ENCODE measurements at regions of chr2 and their contacts with region 1.

Region 1: GRCh38 chr2:234500394-234501006 is 3.6 kb upstream of the ARL4C start:
- DNase-seq: peak; percentile 59 to 91 (median 72)
- ATAC-seq: peak; percentile 46
- H3K4me3 ChIP-seq: no peak overlapping the region
- H3K4me3 Mint-ChIP-seq: peak overlapping the region; percentile 79
- H3K27ac ChIP-seq: no peak overlapping the region
- H3K27ac Mint-ChIP-seq: peak overlapping the region; percentile 96
- H3K4me1 ChIP-seq: peaks cover 29% of the 10 kb centered on the region
- H3K4me1 Mint-ChIP-seq: peaks cover 32% of the 10 kb centered on the region
- H3K27me3 ChIP-seq: no peaks in the 10 kb centered on the region
- H3K27me3 Mint-ChIP-seq: no peaks in the 10 kb centered on the region
- CTCF ChIP-seq: peak; percentile 80

Region 2: DNA sequence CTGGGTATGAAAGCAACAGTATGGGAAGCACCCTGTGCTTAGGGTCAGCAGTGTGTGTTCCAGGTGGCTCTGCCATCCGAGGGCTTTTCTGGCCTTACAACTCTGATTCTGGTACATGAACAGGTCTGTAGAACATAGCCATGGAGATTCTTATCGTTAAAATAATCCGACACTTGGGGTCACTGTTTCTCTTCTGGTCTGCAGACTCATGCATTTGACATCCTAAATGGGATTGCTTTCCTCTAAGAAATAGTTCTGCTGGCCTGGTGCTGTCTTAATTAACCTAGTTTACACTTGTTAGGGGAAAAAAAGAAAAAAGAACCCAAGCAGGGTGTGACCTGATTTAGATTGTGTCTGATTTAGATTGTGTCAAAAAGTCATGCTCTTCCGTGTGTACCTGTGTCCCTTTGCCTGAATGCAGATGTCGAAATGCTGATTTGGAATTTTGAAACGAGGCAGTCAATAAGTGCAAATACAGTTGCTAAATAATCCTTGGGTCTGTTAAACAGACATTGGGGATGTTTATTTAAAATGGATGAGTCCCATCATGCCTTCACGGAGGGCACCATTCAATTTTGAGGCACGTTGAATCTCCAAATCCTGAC is 523.7 kb before region 1 on chr2:
- CTCF ChIA-PET with region 1: interaction called, 3 read pairs
- POLR2A ChIA-PET with region 1: interaction called, 3 read pairs
- intact Hi-C with region 1: loop called (anchors 1 kb)
- DNase-seq: peak in 4 of 14 experiments; percentile 40 to 80 (median 80)
- ATAC-seq: peak; percentile 68
- H3K4me3 ChIP-seq: no peak overlapping the region
- H3K4me3 Mint-ChIP-seq: no peak overlapping the region
- H3K27ac ChIP-seq: no peak overlapping the region
- H3K27ac Mint-ChIP-seq: no peak overlapping the region
- H3K4me1 ChIP-seq: peaks cover 17% of the 10 kb centered on the region
- H3K4me1 Mint-ChIP-seq: peaks cover 28% of the 10 kb centered on the region
- H3K27me3 ChIP-seq: no peaks in the 10 kb centered on the region
- H3K27me3 Mint-ChIP-seq: no peaks in the 10 kb centered on the region
- CTCF ChIP-seq: peak; percentile 81

Region 3: DNA sequence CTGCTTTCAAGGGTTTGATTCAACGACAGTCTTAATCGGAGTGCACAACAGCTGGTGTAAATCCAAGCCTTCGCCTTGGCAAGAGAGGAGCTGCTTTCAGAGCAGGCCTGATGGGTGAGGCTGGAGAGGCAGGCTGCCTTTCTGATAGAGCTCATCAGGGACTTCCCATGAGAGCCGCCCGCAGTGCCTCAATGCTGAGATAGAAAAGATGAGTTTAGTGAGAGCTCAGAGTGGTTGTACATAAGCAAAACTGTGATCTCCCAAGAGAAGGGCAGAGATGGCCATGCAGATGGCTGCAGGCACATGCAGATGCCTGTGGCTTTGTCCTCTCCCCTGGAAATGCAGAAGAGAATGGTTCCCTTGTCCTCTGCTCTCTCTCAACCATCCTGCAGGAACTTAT is 125.8 kb before region 1 on chr2:
- CTCF ChIA-PET with region 1: interaction called, 3 read pairs
- POLR2A ChIA-PET with region 1: interaction called, 5 read pairs
- intact Hi-C with region 1: loop called in 1 of 2 experiments (anchors 5 kb)
- DNase-seq: no peak
- ATAC-seq: no peak
- H3K4me3 ChIP-seq: no peak overlapping the region
- H3K4me3 Mint-ChIP-seq: no peak overlapping the region
- H3K27ac ChIP-seq: no peak overlapping the region
- H3K27ac Mint-ChIP-seq: peak overlapping the region; percentile 88
- H3K4me1 ChIP-seq: peaks cover 39% of the 10 kb centered on the region
- H3K4me1 Mint-ChIP-seq: peaks cover 59% of the 10 kb centered on the region
- H3K27me3 ChIP-seq: no peaks in the 10 kb centered on the region
- H3K27me3 Mint-ChIP-seq: no peaks in the 10 kb centered on the region
- CTCF ChIP-seq: no peak

Region 4: DNA sequence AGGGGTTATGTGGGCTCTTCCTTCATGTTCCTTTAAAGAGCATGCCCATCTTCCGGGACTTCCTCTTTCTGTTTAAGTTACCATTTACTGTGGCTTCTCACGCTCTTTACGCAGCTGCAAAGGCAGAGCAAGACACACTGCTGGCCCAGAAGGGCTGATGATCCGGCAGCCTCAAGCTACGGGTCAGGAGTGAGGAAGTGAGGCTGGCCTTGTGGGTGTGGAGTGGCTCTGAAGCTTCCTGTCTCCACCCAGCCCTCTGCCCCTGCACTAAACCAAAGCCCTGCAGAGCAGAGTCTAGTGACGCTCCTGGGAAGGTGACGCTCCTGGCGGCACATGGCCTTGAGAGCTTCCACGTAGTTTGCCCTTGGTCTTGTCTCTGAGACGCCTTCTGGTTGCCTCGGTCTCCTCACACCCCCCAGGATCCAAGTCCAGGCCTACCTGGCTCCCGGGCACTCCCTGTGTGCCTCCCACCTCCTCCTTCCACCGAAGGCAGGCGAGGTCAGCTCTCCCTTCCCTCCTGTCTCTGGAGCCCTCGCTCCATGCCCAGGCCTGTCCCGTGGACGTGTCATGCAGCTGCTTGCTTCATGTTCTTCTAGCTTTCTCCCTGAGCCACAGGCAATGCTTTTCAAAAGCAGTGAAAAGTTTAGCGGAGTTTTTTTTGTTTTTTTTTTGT is 54.0 kb before region 1 on chr2:
- CTCF ChIA-PET with region 1: interaction called, 7 read pairs
- POLR2A ChIA-PET with region 1: interaction called, 265 read pairs
- intact Hi-C with region 1: no loop called
- DNase-seq: peak; percentile 61 to 96 (median 74)
- ATAC-seq: peak; percentile 81
- H3K4me3 ChIP-seq: peak overlapping the region; percentile 18
- H3K4me3 Mint-ChIP-seq: peak overlapping the region; percentile 57
- H3K27ac ChIP-seq: peak overlapping the region; percentile 85 to 93
- H3K27ac Mint-ChIP-seq: peak overlapping the region; percentile 92
- H3K4me1 ChIP-seq: peaks cover 74% of the 10 kb centered on the region
- H3K4me1 Mint-ChIP-seq: peaks cover 86% of the 10 kb centered on the region
- H3K27me3 ChIP-seq: no peaks in the 10 kb centered on the region
- H3K27me3 Mint-ChIP-seq: no peaks in the 10 kb centered on the region
- CTCF ChIP-seq: no peak

Region 5: GRCh38 chr2:234488913-234489451 is 11.5 kb before region 1 on chr2:
- CTCF ChIA-PET with region 1: interaction called, 4 read pairs
- POLR2A ChIA-PET with region 1: interaction called, 33 read pairs
- intact Hi-C with region 1: no loop called
- DNase-seq: peak; percentile 55 to 94 (median 69)
- ATAC-seq: peak; percentile 69
- H3K4me3 ChIP-seq: peak overlapping the region; percentile 94
- H3K4me3 Mint-ChIP-seq: peak overlapping the region; percentile 82
- H3K27ac ChIP-seq: peak overlapping the region; percentile 70 to 96
- H3K27ac Mint-ChIP-seq: peak overlapping the region; percentile 98
- H3K4me1 ChIP-seq: peaks cover 75% of the 10 kb centered on the region
- H3K4me1 Mint-ChIP-seq: peaks cover 92% of the 10 kb centered on the region
- H3K27me3 ChIP-seq: no peaks in the 10 kb centered on the region
- H3K27me3 Mint-ChIP-seq: no peaks in the 10 kb centered on the region
- CTCF ChIP-seq: no peak